Heart left ventricle (tissue), 16 donors: ENCODE measurements at regions of chr9 and their contacts with region 1.

Region 1: GRCh38 chr9:119289740-119290433 is 79.3 kb downstream of the BRINP1 start:
- DNase-seq: peak in 4 of 5 donors; percentile 33 to 60 (median 52)
- ATAC-seq: peak in 3 of 4 donors; percentile 42 to 70 (median 54)
- H3K4me3 ChIP-seq: no peak overlapping the region
- H3K27ac ChIP-seq: no peak overlapping the region
- H3K4me1 ChIP-seq: no peaks in the 10 kb centered on the region
- H3K27me3 ChIP-seq: no peaks in the 10 kb centered on the region
- CTCF ChIP-seq: peak; percentile 67 to 89 (median 80)
- POLR2A ChIP-seq: no peak

Region 2: GRCh38 chr9:117644133-117644931 is 1645.6 kb before region 1 on chr9:
- intact Hi-C with region 1: loop called in 1 of 10 experiments (anchors 5 kb)
- DNase-seq: peak; percentile 51 to 83 (median 66)
- ATAC-seq: peak; percentile 47 to 82 (median 76)
- H3K4me3 ChIP-seq: peak overlapping the region in 9 of 12 donors; percentile 9 to 50 (median 36)
- H3K27ac ChIP-seq: peak overlapping the region in 8 of 12 donors; percentile 7 to 59 (median 38)
- H3K4me1 ChIP-seq: peaks cover 0 to 23% (median 4%) of the 10 kb centered on the region in 12 donors
- H3K27me3 ChIP-seq: peaks cover 0 to 48% (median 6%) of the 10 kb centered on the region in 9 donors
- CTCF ChIP-seq: peak in 11 of 12 donors; percentile 92 to 99 (median 96)
- POLR2A ChIP-seq: no peak

Region 3: GRCh38 chr9:118595719-118596305 is 694.1 kb before region 1 on chr9:
- intact Hi-C with region 1: loop called in 1 of 10 experiments (anchors 10 kb)
- DNase-seq: peak in 1 of 5 donors; percentile 8
- ATAC-seq: peak in 3 of 4 donors; percentile 48 to 68 (median 64)
- H3K4me3 ChIP-seq: no peak overlapping the region
- H3K27ac ChIP-seq: no peak overlapping the region
- H3K4me1 ChIP-seq: no peaks in the 10 kb centered on the region
- H3K27me3 ChIP-seq: no peaks in the 10 kb centered on the region
- CTCF ChIP-seq: peak in 9 of 12 donors; percentile 5 to 46 (median 35)
- POLR2A ChIP-seq: no peak

Region 4: DNA sequence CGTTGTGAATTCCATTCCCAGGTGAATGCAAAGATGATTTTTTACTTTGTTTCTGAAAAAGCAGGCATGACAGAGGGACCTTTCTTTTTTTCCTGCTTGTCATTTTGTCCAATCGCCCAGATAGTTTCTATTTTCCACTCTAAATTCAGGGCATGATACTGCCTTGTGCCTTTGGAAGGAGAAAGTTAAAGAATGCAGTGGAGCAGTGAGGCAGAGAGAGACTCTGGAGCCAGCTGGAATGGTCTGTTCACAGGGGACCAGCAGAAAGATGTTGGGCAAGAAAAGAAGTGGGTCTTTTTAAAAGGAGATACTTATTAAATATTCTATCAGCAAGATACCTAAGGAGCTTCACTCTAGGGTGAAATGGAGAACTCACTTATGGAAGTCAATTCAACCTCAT is 453.0 kb before region 1 on chr9:
- intact Hi-C with region 1: loop called in 4 of 10 experiments (anchors 2 to 10 kb)
- DNase-seq: no peak
- ATAC-seq: no peak
- H3K4me3 ChIP-seq: no peak overlapping the region
- H3K27ac ChIP-seq: no peak overlapping the region
- H3K4me1 ChIP-seq: no peaks in the 10 kb centered on the region
- H3K27me3 ChIP-seq: no peaks in the 10 kb centered on the region
- CTCF ChIP-seq: no peak
- POLR2A ChIP-seq: no peak

Region 5: DNA sequence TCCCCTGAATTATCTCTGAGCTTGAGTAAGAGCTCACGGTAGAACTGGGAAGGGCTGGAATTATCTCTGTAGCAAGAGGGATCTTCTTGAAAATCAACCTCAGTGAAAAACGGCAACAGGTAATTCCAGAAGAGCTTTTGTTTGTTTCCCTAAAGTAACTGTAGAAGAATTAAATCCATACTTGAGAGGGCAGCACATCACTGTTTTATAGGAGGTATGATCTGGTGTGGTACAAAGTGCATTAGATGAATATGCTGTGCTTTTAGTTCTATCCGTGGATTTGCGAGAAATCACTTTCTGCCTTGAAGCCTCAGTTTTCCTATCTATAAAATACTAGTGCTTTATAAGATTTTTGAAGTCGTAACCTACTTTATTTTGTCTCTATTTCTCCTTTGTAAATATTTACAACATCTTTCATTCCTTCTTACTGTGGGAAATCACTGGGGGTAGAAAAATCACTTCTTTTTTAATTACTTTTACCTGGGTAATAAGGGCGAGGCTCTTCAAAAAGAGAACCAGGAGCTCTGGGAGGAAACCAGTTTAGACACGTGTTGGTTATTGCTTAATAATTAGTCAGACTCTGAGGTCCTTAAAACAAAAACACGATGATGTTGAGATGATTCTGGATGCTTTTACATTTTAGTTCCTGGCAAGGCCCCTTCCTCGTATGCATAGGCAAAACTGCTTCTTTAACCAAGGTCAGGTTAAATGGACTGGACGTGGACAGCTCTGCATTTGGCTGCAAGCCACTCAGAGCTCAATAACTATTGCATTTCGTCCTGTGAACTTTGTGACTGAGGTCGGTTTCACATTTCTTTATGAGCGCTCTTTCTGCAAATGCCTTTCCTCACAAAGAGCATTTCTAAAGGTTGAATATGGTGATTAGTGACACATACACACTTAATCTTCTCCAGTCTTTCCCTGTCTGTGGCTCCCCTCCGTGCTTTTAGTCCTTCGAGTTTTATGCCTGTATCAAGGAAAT is 296.8 kb before region 1 on chr9:
- intact Hi-C with region 1: loop called in 3 of 10 experiments (anchors 5 to 10 kb)
- DNase-seq: no peak
- ATAC-seq: peak in 1 of 4 donors; percentile 43
- H3K4me3 ChIP-seq: no peak overlapping the region
- H3K27ac ChIP-seq: no peak overlapping the region
- H3K4me1 ChIP-seq: peaks cover 0 to 21% (median 0%) of the 10 kb centered on the region in 12 donors
- H3K27me3 ChIP-seq: no peaks in the 10 kb centered on the region
- CTCF ChIP-seq: peak in 3 of 12 donors; percentile 11 to 25 (median 15)
- POLR2A ChIP-seq: no peak

Region 6: DNA sequence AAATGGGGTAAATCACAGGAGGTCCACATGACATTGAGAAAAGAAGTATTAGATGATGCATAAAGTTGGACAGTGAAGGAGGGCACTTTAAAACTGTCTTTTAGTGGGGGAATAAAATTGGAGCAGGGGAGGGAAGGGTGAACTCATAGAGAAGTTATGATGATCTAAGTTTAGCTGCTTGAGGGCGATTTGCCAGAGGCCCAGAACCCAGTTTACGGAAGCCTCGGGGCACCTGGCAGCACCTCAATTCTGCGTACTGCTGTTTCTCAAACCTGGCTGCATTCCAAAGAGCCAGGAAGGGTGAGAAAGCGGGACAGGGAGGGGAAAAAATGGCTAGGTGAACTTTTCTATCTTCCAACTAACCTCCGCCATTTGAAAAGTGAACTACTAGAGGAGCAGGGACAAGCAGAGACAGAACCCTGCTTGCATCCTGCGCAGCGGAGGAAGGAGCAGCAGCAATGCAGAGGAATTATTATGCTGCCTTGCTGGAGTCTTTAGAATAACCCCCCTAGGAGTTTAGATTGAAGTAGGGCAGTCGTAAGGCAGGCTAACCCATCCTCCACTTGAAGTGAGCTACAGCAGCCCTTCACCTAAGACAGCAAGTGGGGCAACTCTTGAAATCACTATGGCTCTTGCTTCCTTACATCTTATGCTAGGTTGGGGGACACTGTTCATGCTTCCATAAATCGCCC is 237.4 kb before region 1 on chr9:
- intact Hi-C with region 1: no loop called
- DNase-seq: peak; percentile 61 to 84 (median 67)
- ATAC-seq: peak in 3 of 4 donors; percentile 81 to 89 (median 84)
- H3K4me3 ChIP-seq: peak overlapping the region in 8 of 12 donors; percentile 13 to 36 (median 20)
- H3K27ac ChIP-seq: peak overlapping the region; percentile 36 to 88 (median 74)
- H3K4me1 ChIP-seq: peaks cover 0 to 18% (median 0%) of the 10 kb centered on the region in 12 donors
- H3K27me3 ChIP-seq: no peaks in the 10 kb centered on the region
- CTCF ChIP-seq: no peak
- POLR2A ChIP-seq: no peak

Region 7: DNA sequence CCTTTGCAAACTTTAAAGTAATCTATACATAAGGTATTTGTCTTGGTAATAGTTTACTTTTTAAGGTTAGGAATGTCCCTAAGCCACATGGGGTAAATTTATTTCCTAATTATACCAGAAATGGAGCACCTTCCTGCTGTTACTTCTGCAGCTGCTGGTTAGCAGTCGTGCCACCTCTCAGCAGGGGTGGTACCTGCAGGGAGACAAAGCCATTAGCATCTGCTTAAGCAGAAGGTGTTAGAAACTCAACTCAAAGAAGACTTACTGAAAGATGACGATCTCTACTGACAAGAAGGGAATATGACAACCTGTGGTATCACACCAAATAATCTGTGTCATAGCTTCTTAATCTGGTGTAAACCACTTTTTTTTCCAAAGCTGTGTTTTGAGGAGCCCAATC is 94.4 kb before region 1 on chr9:
- intact Hi-C with region 1: no loop called
- DNase-seq: no peak
- ATAC-seq: no peak
- H3K4me3 ChIP-seq: no peak overlapping the region
- H3K27ac ChIP-seq: no peak overlapping the region
- H3K4me1 ChIP-seq: no peaks in the 10 kb centered on the region
- H3K27me3 ChIP-seq: no peaks in the 10 kb centered on the region
- CTCF ChIP-seq: no peak
- POLR2A ChIP-seq: no peak